Ascending aorta (tissue), 2 donors: ENCODE measurements at regions of chr17 and their contacts with region 1.

Region 1: DNA sequence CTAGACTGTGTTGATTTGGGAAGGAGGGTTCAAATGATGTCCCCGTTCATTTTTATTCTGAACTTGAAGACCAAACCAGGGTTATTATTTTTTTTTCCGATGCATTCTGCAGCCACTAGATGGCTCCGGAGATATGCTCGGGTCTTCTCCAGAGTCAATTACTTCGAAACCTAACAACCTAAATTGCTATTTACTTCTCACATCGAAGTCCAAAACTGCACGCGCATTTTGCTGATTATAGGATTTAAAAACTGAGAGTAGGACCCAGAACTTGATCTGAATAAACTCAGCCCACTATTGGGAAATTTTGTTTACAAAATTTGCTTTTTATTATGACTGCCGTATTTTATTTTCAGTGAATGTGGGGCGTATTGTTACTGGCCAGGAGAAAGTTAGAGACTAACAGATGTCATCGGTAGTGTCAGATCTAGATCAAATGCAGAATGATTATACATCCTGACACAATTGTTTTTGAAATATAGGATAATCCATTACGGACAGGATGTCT is 263.8 kb downstream of the HS3ST3A1 start:
- DNase-seq: no peak
- H3K4me3 ChIP-seq: peak overlapping the region in 1 of 2 donors; percentile 18
- H3K27ac ChIP-seq: no peak overlapping the region
- H3K4me1 ChIP-seq: no peaks in the 10 kb centered on the region
- H3K27me3 ChIP-seq: no peaks in the 10 kb centered on the region
- CTCF ChIP-seq: peak; percentile 23 to 52 (median 48)

Region 2: DNA sequence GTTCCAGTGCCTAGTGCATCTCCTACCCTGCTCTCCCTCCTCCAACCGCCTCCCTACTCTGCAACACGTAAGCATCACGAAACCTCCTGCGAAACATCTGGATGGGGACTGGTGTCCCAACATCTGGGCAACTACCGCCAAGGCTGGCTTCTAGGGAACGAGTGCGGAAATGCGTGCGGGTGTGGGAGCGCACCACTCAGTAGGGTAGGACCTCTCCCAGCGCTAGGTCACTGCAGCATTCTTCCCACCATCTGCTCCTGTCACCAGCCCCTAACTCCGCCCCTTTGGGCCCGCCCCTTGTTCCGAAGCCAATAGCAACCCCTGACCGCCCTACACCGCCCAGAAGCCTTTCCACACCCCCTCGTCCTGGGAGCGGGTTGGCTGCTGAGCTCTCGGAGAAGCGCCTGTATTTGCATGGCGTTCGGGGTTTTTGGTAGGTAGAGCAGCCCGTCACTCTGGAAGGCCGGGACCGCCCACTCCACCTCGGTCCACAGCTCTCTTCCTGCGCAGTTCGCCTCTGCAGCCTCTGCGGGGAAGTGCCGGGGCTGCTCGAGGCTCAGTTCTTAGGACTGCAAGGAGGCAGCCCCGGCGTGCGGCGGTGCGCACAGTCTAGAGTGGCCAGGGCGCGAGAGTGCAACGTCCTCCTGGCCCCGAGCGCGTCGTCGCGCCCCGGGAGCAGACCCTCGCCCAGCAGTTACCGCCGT is 962.8 kb after region 1 on chr17 and contains the start of gene HS3ST3B1:
- intact Hi-C with region 1: loop called (anchors 5 kb)
- DNase-seq: peak; percentile 95 to 97
- H3K4me3 ChIP-seq: peak within 1 kb of the TSS; percentile 80 to 86
- H3K27ac ChIP-seq: peak within 1 kb of the TSS; percentile 51 to 65
- H3K4me1 ChIP-seq: peaks cover 14 to 22% of the 10 kb centered on the region in 2 donors
- H3K27me3 ChIP-seq: peaks cover 18% of the 10 kb centered on the region
- CTCF ChIP-seq: no peak
- total RNA-seq, gene HS3ST3B1: 14.6 TPM